ENCODE measurements at regions of chr10 and their contacts with region 1.

Region 1: DNA sequence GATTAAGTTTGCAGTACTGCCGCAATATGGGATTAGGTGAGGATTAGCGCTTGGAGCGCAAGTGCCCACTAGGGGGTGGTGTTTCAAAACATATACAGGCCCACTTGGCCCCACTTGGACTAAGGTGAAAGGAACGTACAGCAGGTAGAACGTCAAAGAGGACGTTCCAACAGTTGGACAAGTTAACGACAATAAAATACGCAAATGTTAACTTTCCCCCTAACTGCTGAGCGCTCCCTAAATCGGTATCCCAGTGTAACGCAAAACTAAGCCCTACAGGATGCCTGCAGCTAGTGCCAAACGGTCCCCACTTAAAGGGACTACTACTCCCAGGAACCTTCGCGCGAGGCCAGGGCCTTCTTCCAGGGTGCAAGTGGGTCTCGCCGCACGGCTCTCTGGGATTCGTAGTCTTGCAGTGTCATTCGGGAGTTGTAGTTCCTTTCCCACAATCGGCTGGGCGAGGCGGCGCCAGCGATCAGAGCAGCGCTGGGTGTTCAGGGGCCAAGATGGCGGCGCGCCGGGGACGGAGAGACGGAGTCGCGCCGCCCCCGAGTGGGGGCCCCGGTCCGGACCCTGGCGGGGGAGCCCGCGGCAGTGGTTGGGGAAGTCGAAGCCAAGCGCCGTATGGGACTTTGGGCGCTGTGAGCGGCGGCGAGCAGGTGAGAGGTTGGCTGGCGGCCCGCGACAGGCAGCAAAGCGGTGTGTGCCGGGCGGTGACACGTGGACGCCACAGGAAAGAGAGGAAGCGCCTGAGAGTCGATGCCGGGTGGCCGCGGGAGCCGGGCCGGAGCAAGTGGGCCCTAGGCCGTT is at the start of gene PPRC1:
- DNase-seq: peak; percentile 98 to 99
- ATAC-seq: peak; percentile 97
- H3K4me3 ChIP-seq: peak within 1 kb of the TSS; percentile 90 to 98 (median 94)
- H3K27ac ChIP-seq: peak within 1 kb of the TSS; percentile 97 to 100 (median 99)
- H3K4me1 ChIP-seq: peaks cover 28 to 31% of the 10 kb centered on the region in 2 donors
- H3K27me3 ChIP-seq: no peaks in the 10 kb centered on the region
- CTCF ChIP-seq: peak; percentile 73 to 95 (median 90)
- POLR2A ChIP-seq: peak; percentile 91 to 93
- total RNA-seq, gene PPRC1: 13.3 to 26.5 (median 17.1) TPM

Region 2: DNA sequence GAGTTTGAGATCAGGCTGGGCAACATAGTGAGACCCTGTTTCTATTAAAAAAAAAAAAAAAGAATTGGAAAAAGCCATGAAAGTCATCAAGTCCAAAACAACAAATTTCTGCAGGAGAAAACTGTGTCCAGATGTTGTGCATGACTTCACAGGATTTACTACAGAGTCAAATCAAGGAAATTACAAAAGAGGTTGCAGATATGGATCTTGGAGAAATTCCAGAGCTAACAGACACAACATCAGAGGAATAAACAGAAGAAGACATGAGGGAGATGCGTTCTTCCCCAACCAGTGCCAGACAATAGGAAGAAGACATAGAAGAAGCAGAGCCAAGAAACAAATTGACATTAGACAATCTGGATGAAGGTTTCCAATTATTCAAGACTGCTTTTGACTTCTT is 264.8 kb before region 1 on chr10:
- in situ Hi-C with region 1: no loop called
- intact Hi-C with region 1: no loop called
- DNase-seq: no peak
- ATAC-seq: no peak
- H3K4me3 ChIP-seq: no peak overlapping the region
- H3K27ac ChIP-seq: no peak overlapping the region
- H3K4me1 ChIP-seq: no peaks in the 10 kb centered on the region
- H3K27me3 ChIP-seq: no peaks in the 10 kb centered on the region
- CTCF ChIP-seq: no peak
- POLR2A ChIP-seq: no peak

Region 3: GRCh38 chr10:101879456-101880231 is 253.1 kb before region 1 on chr10:
- in situ Hi-C with region 1: no loop called
- intact Hi-C with region 1: no loop called
- DNase-seq: no peak
- ATAC-seq: no peak
- H3K4me3 ChIP-seq: no peak overlapping the region
- H3K27ac ChIP-seq: no peak overlapping the region
- H3K4me1 ChIP-seq: no peaks in the 10 kb centered on the region
- H3K27me3 ChIP-seq: no peaks in the 10 kb centered on the region
- CTCF ChIP-seq: no peak
- POLR2A ChIP-seq: no peak

Region 4: DNA sequence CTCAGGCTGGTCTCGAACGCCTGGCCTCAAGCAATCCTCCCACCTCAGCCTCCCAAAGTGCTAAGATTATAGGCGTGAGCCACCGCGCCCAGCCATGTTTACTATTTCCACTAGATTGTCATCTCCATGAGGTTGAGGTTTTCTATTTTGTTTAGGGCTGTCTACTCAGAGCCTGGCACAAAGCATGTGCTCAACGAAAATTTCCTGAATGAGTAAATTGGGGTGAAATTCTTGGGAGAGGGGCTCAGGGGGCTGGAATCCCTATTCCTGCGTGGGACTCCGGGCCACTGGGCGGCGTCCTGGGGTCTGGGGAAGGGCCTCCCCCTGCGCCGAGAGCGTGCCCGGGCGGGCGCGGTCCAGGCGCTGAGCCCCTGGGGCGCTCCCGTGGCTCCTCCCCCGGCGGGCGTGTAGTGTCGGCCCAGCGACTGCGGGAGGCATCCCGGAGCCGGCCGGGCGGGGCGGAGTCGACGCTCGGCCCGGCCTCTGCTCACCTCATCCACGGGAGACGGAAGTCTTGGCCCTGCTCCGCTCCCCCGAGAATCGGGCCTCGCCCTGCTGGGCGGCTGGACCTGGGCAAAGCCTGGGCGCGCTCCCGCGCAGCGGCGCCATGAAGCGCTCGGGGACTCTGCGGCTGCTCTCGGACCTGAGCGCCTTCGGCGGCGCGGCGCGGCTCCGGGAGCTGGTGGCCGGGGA is 67.8 kb before region 1 on chr10 and contains the start of gene HPS6:
- in situ Hi-C with region 1: no loop called
- intact Hi-C with region 1: loop called (anchors 5 kb)
- DNase-seq: peak; percentile 79 to 85
- ATAC-seq: peak; percentile 91 to 94
- H3K4me3 ChIP-seq: peak within 1 kb of the TSS; percentile 66 to 95 (median 85)
- H3K27ac ChIP-seq: peak within 1 kb of the TSS; percentile 81 to 96 (median 96)
- H3K4me1 ChIP-seq: peaks cover 31 to 39% of the 10 kb centered on the region in 2 donors
- H3K27me3 ChIP-seq: no peaks in the 10 kb centered on the region
- CTCF ChIP-seq: peak in 2 of 5 experiments; percentile 17 to 21
- POLR2A ChIP-seq: peak; percentile 62 to 77
- total RNA-seq, gene HPS6: 12.7 to 21.8 (median 19.4) TPM

Region 5: DNA sequence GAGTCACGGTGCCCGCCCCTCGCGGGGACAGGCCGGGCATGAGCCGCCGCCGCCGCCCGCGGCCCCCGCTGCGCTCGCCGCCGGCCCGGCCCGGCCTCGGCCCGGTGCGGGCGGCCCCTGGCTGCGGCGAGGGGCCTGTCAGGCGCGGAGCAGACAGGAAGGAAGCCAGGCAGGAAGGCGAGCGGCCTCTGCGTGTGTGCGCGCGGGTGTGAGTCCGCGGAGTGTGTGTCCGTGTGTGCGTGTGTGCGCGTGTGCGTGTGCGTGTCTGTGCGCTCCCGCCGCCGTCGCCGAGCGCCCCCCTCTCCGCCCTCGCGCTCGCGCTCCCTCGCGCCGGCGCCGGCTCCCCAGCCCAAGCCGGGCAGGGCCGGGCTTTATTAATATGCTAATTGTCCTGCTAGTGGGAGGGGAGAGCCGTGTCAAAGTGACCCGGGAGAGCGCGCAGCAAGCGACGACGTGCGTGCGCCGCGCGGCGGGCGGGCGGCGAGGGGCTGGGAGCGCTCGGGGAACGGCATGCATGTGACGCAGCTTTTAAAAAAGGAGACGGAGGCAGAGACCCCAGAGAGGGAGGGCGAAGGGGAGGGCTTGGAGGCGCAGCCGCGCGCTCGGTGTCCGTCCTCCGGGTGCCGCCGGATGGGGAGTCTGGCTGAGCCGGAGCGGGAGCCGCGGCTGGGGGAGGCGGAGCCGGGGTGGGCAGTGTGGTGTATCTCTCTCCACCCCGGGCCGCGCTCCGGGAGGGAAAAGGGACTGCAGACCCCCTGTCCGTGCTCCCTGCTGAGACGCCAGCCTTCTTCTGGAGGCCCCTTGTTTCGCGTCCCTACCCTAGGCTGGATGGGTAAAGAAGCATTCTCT is 12.4 kb before region 1 on chr10 and contains the start of gene LDB1:
- in situ Hi-C with region 1: no loop called
- intact Hi-C with region 1: loop called (anchors 1 kb)
- DNase-seq: peak; percentile 76 to 80
- ATAC-seq: peak; percentile 78 to 79
- H3K4me3 ChIP-seq: peak within 1 kb of the TSS; percentile 79 to 95 (median 84)
- H3K27ac ChIP-seq: peak within 1 kb of the TSS; percentile 92 to 100 (median 98)
- H3K4me1 ChIP-seq: peaks cover 50 to 52% of the 10 kb centered on the region in 2 donors
- H3K27me3 ChIP-seq: no peaks in the 10 kb centered on the region
- CTCF ChIP-seq: peak in 3 of 5 experiments; percentile 15 to 29 (median 19)
- POLR2A ChIP-seq: peak; percentile 97 to 98
- total RNA-seq, gene LDB1: 15.9 to 32.7 (median 28.6) TPM

Region 6: DNA sequence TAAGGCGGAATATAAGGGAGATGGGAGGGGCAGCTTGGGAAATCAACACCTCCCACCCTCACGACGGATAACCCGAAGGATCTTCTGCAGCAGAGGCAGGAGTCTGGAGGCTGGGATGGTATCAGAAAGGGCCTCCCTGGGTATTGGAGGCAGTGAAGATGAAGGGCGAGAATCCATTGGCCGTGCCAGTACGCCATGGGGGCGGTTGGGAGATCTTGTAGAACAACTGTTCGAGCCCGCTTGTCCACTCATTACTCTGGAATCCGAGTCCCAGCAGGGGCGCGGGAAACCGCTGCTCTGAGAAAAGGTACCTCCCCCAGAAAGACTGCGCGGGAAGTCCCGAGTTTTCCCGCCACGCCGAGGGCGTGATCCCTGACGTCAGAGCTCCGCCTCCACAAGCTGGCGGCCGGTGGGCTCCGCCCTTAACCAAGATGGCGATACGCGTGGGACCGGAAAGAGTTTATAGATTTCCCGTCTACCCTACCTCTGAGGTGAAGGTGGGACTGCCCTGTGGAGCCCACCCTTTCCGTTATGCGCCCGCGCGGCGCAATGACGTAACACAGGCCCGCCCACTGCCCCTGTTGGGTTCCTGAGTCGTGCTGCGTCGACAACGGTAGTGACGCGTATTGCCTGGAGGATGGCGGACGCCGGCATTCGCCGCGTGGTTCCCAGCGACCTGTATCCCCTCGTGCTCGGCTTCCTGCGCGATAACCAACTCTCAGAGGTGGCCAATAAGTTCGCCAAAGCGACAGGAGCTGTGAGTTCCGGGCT is 19.2 kb after region 1 on chr10 and contains the start of gene NOLC1:
- in situ Hi-C with region 1: no loop called
- intact Hi-C with region 1: loop called (anchors 1 kb)
- DNase-seq: peak; percentile 96 to 99
- ATAC-seq: peak; percentile 98 to 99
- H3K4me3 ChIP-seq: peak within 1 kb of the TSS; percentile 75 to 99 (median 92)
- H3K27ac ChIP-seq: peak within 1 kb of the TSS; percentile 82 to 97 (median 94)
- H3K4me1 ChIP-seq: peaks cover 12 to 16% of the 10 kb centered on the region in 2 donors
- H3K27me3 ChIP-seq: no peaks in the 10 kb centered on the region
- CTCF ChIP-seq: peak in 1 of 5 experiments; percentile 24
- POLR2A ChIP-seq: peak; percentile 84 to 90
- total RNA-seq, gene NOLC1: 37.2 to 76.7 (median 71.1) TPM

Measured in gastrocnemius medialis (tissue), 4 donors.